Calu3 (cell line): ENCODE measurements at regions of chr1 and their contacts with region 1.

Region 1: DNA sequence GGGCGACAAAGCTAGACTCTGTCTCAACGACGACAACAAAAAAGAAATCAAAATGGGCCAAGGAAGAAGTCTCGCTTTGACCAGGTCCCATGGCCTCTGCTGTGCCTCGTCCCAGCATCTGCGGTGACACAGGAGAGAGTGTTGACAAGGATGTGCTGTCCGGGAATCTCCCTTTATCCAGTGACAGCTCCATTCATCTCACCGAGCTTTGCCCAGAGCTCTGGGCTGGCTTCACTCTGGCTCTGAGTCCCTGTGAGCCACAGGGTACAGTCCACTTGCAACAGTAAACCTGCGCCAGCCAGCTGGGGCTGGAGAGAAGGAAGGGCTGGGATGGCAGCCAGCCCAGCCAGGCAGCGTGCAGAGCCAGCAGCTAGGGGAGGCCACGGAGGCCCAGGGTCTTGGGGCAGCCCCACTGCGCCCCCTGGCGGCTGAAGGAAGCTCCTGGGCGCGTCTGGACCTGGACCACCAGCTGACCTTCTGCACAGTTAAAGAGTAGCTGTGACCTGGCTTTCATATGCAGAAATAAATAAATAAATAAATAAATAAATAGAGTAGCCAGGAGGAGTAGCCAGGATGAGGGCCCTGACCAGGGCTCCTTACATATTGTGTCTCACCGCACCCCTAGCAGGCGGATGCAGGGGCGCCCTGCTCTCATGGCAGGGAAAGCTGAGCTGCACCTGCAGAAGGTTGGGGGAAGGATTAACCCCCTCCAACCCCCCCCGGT is 29.7 kb downstream of the ENO1 start:
- DNase-seq: peak; percentile 88
- H3K4me3 Mint-ChIP-seq: no peak overlapping the region
- H3K27ac Mint-ChIP-seq: no peak overlapping the region
- H3K4me1 Mint-ChIP-seq: peaks cover 6% of the 10 kb centered on the region
- H3K27me3 Mint-ChIP-seq: no peaks in the 10 kb centered on the region
- CTCF ChIP-seq: peak; percentile 81

Region 2: DNA sequence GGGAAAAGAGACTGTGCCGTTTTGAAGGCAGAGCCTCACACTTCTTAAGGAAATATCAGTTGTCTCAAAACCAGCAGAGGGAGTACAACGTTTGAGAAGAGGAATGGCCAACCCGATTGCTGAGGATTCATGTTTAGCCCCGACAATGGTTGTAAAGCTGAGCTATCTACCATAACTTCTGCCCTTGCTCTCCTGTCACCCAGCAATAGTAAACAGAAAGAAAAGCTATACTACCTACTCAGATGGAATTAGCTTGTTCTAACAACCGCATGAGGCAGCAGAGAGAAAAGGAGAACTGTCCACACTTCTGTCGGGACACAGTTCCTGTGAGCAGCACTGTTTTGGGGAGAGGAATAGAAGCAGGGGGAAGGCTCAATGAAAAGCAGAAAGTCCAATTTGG is 439.7 kb before region 1 on chr1:
- CTCF ChIA-PET with region 1: no interaction called
- intact Hi-C with region 1: no loop called
- DNase-seq: no peak
- H3K4me3 Mint-ChIP-seq: no peak overlapping the region
- H3K27ac Mint-ChIP-seq: peak overlapping the region; percentile 63
- H3K4me1 Mint-ChIP-seq: peaks cover 19% of the 10 kb centered on the region
- H3K27me3 Mint-ChIP-seq: no peaks in the 10 kb centered on the region
- CTCF ChIP-seq: no peak

Region 3: DNA sequence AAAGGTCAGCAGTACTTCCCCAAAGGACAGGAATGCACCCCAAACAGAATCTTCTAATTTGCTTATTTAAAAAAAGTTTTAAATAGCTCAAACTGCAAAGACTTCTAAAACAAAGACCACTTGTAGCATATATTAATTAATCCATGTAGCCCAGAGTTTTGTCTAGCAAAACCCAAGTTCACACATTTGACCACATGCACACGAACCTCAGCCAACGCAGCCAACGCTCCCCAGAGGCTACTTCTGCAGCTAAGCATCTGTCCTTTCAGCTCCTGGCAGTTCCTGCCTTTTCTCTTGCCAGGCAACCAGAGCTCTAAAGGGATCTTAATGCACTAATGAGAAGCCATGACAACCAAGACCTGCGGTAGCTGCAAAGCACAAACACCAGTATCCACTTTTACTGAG is 121.0 kb before region 1 on chr1:
- CTCF ChIA-PET with region 1: interaction called, 11 read pairs
- intact Hi-C with region 1: no loop called
- DNase-seq: no peak
- H3K4me3 Mint-ChIP-seq: no peak overlapping the region
- H3K27ac Mint-ChIP-seq: no peak overlapping the region
- H3K4me1 Mint-ChIP-seq: peaks cover 5% of the 10 kb centered on the region
- H3K27me3 Mint-ChIP-seq: no peaks in the 10 kb centered on the region
- CTCF ChIP-seq: no peak

Region 4: DNA sequence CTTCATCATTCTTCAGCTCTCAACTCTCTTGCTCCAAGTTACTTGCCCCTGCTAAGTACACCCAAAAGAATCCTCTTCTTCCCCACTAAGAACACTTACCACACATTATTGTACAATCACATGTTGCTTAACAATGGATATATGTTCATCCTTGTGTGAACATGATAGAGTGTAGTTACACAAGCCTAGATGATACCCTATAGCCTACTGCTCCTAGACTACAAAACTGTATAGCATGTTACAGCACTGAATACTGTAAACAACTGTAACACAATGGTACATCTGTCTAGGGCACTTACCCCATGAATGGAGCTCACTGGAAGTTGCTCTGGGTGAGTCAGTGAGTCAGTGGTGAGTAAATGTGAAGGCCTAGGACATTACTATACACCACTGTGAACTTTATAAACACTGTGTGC is 108.8 kb before region 1 on chr1:
- CTCF ChIA-PET with region 1: interaction called, 3 read pairs
- intact Hi-C with region 1: loop called (anchors 10 kb)
- DNase-seq: peak; percentile 24
- H3K4me3 Mint-ChIP-seq: no peak overlapping the region
- H3K27ac Mint-ChIP-seq: no peak overlapping the region
- H3K4me1 Mint-ChIP-seq: peaks cover 22% of the 10 kb centered on the region
- H3K27me3 Mint-ChIP-seq: no peaks in the 10 kb centered on the region
- CTCF ChIP-seq: no peak

Region 5: DNA sequence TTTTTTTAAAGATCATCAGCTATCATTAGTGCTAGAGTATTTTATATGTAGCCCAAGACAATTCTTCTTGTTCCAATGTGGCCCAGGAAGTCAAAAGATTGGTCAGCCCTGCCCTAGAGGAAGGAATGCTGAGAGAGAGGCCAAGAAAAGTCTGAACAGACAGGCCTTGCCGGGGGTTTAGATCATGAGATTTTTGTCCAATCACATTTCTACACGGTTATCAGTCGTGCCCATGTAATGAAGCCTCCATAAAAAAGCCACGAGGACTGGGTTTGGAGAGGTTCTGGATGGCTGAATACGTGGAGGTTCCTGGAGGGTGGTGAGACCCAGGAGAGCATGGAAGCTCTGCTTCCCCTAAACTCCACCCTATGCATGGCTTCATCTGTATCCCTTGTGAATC is 53.9 kb after region 1 on chr1:
- CTCF ChIA-PET with region 1: no interaction called
- intact Hi-C with region 1: no loop called
- DNase-seq: no peak
- H3K4me3 Mint-ChIP-seq: no peak overlapping the region
- H3K27ac Mint-ChIP-seq: no peak overlapping the region
- H3K4me1 Mint-ChIP-seq: peaks cover 29% of the 10 kb centered on the region
- H3K27me3 Mint-ChIP-seq: no peaks in the 10 kb centered on the region
- CTCF ChIP-seq: no peak

Region 6: DNA sequence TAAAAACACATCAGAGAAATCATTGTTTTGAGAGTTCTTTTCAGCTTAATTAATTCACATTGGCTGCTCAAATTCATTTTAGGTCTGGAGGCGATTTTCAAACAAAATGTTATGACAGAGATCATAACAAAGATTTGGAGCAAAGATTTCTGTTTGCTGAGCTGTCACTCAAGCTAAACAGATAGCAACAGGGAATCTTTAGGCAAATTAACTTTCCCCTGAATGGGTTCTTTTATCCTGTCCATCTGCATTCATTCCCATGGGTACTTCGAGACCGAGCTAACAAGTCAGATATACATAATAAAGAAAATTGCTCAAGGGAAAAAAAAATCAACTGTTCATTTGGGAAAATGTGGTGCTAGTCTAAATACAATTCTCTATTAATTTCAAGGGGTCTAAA is 66.6 kb after region 1 on chr1:
- CTCF ChIA-PET with region 1: no interaction called
- intact Hi-C with region 1: no loop called
- DNase-seq: no peak
- H3K4me3 Mint-ChIP-seq: no peak overlapping the region
- H3K27ac Mint-ChIP-seq: no peak overlapping the region
- H3K4me1 Mint-ChIP-seq: no peaks in the 10 kb centered on the region
- H3K27me3 Mint-ChIP-seq: no peaks in the 10 kb centered on the region
- CTCF ChIP-seq: no peak